ENCODE measurements at regions of chr2 and their contacts with region 1.

Region 1: GRCh38 chr2:68594674-68595492 is 48.5 kb upstream of the PROKR1 start:
- DNase-seq: peak; percentile 75 to 78 (median 76)
- ATAC-seq: peak; percentile 86
- H3K4me3 ChIP-seq: no peak overlapping the region
- H3K27ac ChIP-seq: no peak overlapping the region
- H3K4me1 ChIP-seq: peaks cover 5 to 17% of the 10 kb centered on the region in 2 experiments; a peak in 3 of 5 replicates
- H3K27me3 ChIP-seq: no peaks in the 10 kb centered on the region
- CTCF ChIP-seq: peak; percentile 72 to 91 (median 80)
- EP300 ChIP-seq: no peak
- POLR2A ChIP-seq: no peak
- RAD21 ChIP-seq: peak in 1 of 2 experiments; percentile 62; a peak in 3 of 4 replicates

Region 2: DNA sequence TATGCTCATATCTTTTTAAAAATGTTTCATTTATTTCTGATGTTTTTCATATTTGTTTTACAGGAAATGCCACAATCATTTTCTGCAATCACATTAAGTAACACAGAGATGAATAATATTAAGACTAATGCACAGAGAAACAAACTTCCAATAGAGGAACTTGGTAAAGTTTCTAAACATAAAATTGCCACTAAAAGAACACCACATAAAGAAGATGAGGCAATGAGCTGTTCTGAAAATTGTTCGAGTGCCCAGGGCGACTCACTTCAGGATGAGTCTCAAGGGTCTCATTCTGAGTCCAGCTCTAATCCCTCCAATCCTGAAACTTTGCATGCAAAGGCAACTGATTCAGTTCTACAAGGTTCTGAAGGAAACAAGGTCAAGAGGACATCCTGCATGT is 57.1 kb before region 1 on chr2:
- CTCF ChIA-PET with region 1: no interaction called
- POLR2A ChIA-PET with region 1: interaction called, 3 read pairs
- in situ Hi-C with region 1: no loop called
- intact Hi-C with region 1: loop called (anchors 10 kb)
- DNase-seq: no peak
- ATAC-seq: no peak
- H3K4me3 ChIP-seq: no peak overlapping the region
- H3K27ac ChIP-seq: no peak overlapping the region
- H3K4me1 ChIP-seq: peaks cover 0 to 10% of the 10 kb centered on the region in 2 experiments; a peak in 4 of 5 replicates
- H3K27me3 ChIP-seq: no peaks in the 10 kb centered on the region
- CTCF ChIP-seq: no peak
- EP300 ChIP-seq: no peak
- POLR2A ChIP-seq: no peak
- RAD21 ChIP-seq: no peak

Region 3: GRCh38 chr2:68548396-68548795 is 46.5 kb before region 1 on chr2:
- CTCF ChIA-PET with region 1: no interaction called
- POLR2A ChIA-PET with region 1: no interaction called
- in situ Hi-C with region 1: no loop called
- intact Hi-C with region 1: no loop called
- DNase-seq: no peak
- ATAC-seq: no peak
- H3K4me3 ChIP-seq: no peak overlapping the region
- H3K27ac ChIP-seq: no peak overlapping the region
- H3K4me1 ChIP-seq: no peaks in the 10 kb centered on the region
- H3K27me3 ChIP-seq: no peaks in the 10 kb centered on the region
- CTCF ChIP-seq: no peak
- EP300 ChIP-seq: no peak
- POLR2A ChIP-seq: no peak
- RAD21 ChIP-seq: no peak

Region 4: GRCh38 chr2:68715353-68716041 is 120.6 kb after region 1 on chr2:
- CTCF ChIA-PET with region 1: no interaction called
- POLR2A ChIA-PET with region 1: no interaction called
- in situ Hi-C with region 1: no loop called
- intact Hi-C with region 1: loop called (anchors 10 kb)
- DNase-seq: peak; percentile 72 to 81 (median 76)
- ATAC-seq: peak; percentile 99
- H3K4me3 ChIP-seq: no peak overlapping the region
- H3K27ac ChIP-seq: no peak overlapping the region
- H3K4me1 ChIP-seq: peaks cover 0 to 6% of the 10 kb centered on the region in 2 experiments; a peak in 2 of 5 replicates
- H3K27me3 ChIP-seq: no peaks in the 10 kb centered on the region
- CTCF ChIP-seq: peak; percentile 84 to 88 (median 84)
- EP300 ChIP-seq: no peak
- POLR2A ChIP-seq: no peak
- RAD21 ChIP-seq: peak; percentile 54 to 84

Region 5: GRCh38 chr2:68819556-68819955 is 224.7 kb after region 1 on chr2:
- CTCF ChIA-PET with region 1: no interaction called
- POLR2A ChIA-PET with region 1: no interaction called
- in situ Hi-C with region 1: no loop called
- intact Hi-C with region 1: no loop called
- DNase-seq: no peak
- ATAC-seq: no peak
- H3K4me3 ChIP-seq: no peak overlapping the region
- H3K27ac ChIP-seq: no peak overlapping the region
- H3K4me1 ChIP-seq: no peaks in the 10 kb centered on the region
- H3K27me3 ChIP-seq: no peaks in the 10 kb centered on the region
- CTCF ChIP-seq: no peak
- EP300 ChIP-seq: no peak
- POLR2A ChIP-seq: no peak
- RAD21 ChIP-seq: no peak

Region 6: DNA sequence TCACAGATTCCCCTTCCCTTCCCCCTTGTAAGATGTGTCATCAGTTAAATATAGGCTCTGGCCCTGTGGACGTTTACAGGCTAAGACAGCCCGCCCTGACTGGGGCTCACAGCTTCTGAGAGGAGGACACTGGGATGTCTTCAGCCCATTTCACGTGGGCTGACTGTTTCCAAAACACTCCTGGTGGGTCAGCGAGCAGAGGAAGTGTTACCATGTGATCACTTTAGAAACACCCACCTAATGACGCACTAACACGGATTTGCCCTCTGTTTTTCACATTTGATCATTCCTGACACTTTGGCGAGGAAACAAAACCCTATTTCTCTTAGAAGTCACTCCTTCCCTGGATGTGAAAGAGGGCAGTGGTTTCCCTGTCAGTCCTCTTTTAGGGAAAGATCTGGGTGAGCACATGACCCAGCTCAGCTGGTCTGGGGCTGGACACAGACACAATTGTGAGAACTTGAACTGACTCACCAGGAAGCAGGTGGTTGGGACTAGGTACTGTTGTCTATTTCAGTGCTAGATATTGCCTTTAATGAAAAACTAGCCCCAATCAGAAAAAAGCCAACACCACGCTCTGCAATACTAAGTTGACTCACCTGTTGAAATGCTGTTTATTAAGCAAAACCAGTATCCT is 237.5 kb after region 1 on chr2:
- CTCF ChIA-PET with region 1: no interaction called
- POLR2A ChIA-PET with region 1: no interaction called
- in situ Hi-C with region 1: no loop called
- intact Hi-C with region 1: no loop called
- DNase-seq: peak; percentile 29 to 77 (median 50)
- ATAC-seq: peak; percentile 71
- H3K4me3 ChIP-seq: no peak overlapping the region
- H3K27ac ChIP-seq: peak overlapping the region; percentile 78
- H3K4me1 ChIP-seq: peaks cover 23 to 64% of the 10 kb centered on the region in 2 experiments
- H3K27me3 ChIP-seq: no peaks in the 10 kb centered on the region
- CTCF ChIP-seq: no peak
- EP300 ChIP-seq: no peak; the same call in 1 of the 2 replicates
- POLR2A ChIP-seq: 0 out of 2 replicates have a peak, but pooled peaks have one; percentile 42
- RAD21 ChIP-seq: no peak

Region 7: GRCh38 chr2:68846091-68846490 is 251.2 kb after region 1 on chr2:
- CTCF ChIA-PET with region 1: no interaction called
- POLR2A ChIA-PET with region 1: no interaction called
- in situ Hi-C with region 1: no loop called
- intact Hi-C with region 1: no loop called
- DNase-seq: no peak
- ATAC-seq: no peak
- H3K4me3 ChIP-seq: no peak overlapping the region
- H3K27ac ChIP-seq: no peak overlapping the region
- H3K4me1 ChIP-seq: peaks cover 0 to 27% of the 10 kb centered on the region in 2 experiments; a peak in 3 of 5 replicates
- H3K27me3 ChIP-seq: no peaks in the 10 kb centered on the region
- CTCF ChIP-seq: no peak
- EP300 ChIP-seq: no peak
- POLR2A ChIP-seq: no peak
- RAD21 ChIP-seq: no peak